Gastrocnemius medialis (tissue), 4 donors: ENCODE measurements at regions of chr1 and their contacts with region 1.

Region 1: GRCh38 chr1:226608699-226609505 is 60.3 kb downstream of the STUM start:
- DNase-seq: peak; percentile 23 to 41
- ATAC-seq: peak; percentile 37 to 60
- H3K4me3 ChIP-seq: no peak overlapping the region
- H3K27ac ChIP-seq: peak overlapping the region in 1 of 4 donors; percentile 7
- H3K4me1 ChIP-seq: peaks cover under 1 to 1% of the 10 kb centered on the region in 2 donors
- H3K27me3 ChIP-seq: peaks cover 0 to 6% (median 0%) of the 10 kb centered on the region in 3 donors
- CTCF ChIP-seq: peak; percentile 55 to 82 (median 74)
- POLR2A ChIP-seq: no peak

Region 2: DNA sequence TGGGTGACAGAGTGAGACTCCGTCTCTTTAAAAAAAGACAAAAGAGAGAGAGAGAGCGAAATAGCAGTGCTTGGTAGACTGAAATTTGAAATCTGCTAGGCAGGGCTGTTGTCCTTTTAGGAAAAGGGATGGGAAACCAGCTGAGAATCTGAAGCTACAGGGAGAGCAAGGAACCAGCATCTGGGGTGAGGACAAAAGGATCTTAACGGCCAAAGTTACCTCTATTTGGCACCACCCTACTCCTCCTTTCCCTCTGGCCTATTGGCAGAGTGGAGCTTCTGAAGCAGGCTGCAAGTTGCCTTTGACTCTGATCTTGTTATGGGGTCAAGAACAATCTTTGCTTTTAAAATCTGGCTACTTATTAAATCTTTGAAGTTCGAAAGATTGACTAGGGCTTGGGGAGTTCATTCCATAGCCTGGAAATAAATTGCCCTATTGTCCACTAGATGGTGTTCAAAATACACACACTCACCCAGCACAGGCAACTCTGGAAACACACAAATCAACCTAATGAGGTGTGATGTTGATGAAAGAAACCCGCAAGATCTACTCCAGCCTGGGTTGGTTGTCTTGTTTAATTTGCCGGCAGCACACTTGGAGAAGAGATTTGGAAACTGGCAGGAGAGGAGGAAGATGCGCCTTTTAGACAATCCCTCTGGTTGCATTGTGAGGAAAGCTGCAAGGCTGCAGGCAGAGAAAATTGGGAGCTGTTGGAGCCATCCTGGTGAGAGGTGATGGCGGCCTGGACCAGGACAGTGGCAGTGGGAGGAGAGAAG is 184.5 kb before region 1 on chr1:
- in situ Hi-C with region 1: loop called in 1 of 4 experiments (anchors 10 kb)
- intact Hi-C with region 1: loop called (anchors 5 kb)
- DNase-seq: no peak
- ATAC-seq: peak; percentile 49 to 52
- H3K4me3 ChIP-seq: no peak overlapping the region
- H3K27ac ChIP-seq: no peak overlapping the region
- H3K4me1 ChIP-seq: no peaks in the 10 kb centered on the region
- H3K27me3 ChIP-seq: peaks cover 0 to 5% (median 0%) of the 10 kb centered on the region in 3 donors
- CTCF ChIP-seq: peak in 4 of 5 experiments; percentile 23 to 59 (median 49)
- POLR2A ChIP-seq: no peak

Region 3: DNA sequence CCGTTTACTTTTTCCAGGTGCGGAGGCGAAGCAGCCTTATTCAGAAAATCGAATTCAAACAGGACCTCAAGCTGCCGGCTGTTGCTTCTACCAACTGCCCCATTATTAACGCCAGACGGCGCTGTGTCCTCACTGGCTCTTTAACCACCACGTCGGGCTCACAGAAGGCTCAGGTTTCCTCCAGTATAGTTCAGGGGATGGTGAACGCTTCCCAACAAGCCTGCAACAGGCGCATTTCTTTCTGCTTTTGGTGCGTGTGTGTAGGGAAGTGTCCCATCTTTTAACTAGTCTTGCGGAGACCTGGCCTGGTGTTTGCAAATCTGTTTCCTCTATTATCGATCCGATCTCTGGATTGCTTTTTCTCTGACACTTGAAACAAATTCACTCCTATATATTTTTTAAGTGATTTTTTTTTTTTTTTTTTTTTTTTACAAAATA is 61.1 kb before region 1 on chr1:
- in situ Hi-C with region 1: no loop called
- intact Hi-C with region 1: loop called (anchors 2 kb)
- DNase-seq: peak; percentile 78 to 82
- ATAC-seq: peak; percentile 78 to 85
- H3K4me3 ChIP-seq: peak overlapping the region in 2 of 4 donors; percentile 50 to 57
- H3K27ac ChIP-seq: peak overlapping the region in 3 of 4 donors; percentile 13 to 61 (median 47)
- H3K4me1 ChIP-seq: peaks cover 17 to 21% of the 10 kb centered on the region in 2 donors
- H3K27me3 ChIP-seq: peaks cover 9 to 20% (median 10%) of the 10 kb centered on the region in 3 donors
- CTCF ChIP-seq: peak; percentile 68 to 90 (median 78)
- POLR2A ChIP-seq: peak in 1 of 2 donors; percentile 20

Region 4: DNA sequence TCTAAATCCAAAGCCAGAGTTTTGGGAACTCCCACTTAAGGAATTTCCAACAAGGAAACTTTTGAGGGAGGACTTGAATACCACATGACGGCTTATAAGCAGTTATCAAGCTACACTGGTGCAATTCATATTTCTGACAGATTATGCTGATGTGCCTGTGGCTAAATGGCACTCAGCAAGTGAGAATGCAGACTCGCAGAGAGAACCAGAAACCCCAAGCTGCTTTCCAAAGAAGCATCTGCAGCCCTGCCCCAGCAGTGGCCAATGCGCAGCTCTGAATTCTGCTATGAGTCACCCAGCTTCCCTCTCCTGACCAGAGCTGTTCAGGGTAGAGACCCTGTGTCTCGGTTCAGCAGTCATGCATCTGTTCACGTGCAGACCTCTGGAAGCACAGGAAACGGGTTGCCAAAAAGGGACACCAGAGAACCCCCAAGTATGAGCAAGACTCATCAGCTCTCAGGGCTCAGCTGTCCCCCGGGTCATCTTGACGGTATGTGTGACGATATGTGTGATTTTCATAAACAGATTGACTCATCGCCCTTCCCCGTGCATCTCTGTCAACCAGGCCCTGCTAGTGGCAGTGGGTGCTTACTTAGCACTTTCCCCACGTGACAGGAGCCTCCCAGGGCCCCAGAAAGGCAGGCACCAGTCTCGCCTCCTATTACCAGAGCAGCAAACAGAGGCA is 53.9 kb after region 1 on chr1:
- in situ Hi-C with region 1: no loop called
- intact Hi-C with region 1: no loop called
- DNase-seq: peak; percentile 88 to 92
- ATAC-seq: peak; percentile 68 to 73
- H3K4me3 ChIP-seq: no peak overlapping the region
- H3K27ac ChIP-seq: no peak overlapping the region
- H3K4me1 ChIP-seq: peaks cover 94 to 99% of the 10 kb centered on the region in 2 donors
- H3K27me3 ChIP-seq: no peaks in the 10 kb centered on the region
- CTCF ChIP-seq: no peak
- POLR2A ChIP-seq: peak; percentile 60 to 66